Activated naive CD4-positive, alpha-beta T cell treated with anti-CD3 and anti-CD28 coated beads, Interleukin-2, amount 10 ng/mL, durations not matched to agents 7 days and 5 days (primary cell): ENCODE measurements at regions of chr4 and their contacts with region 1.

Region 1: GRCh38 chr4:154618708-154619315 is 6.4 kb upstream of the FGG start:
- DNase-seq: peak; percentile 81
- H3K4me3 Mint-ChIP-seq: no peak overlapping the region
- H3K27ac Mint-ChIP-seq: no peak overlapping the region
- H3K4me1 Mint-ChIP-seq: peaks cover 14% of the 10 kb centered on the region
- H3K27me3 Mint-ChIP-seq: peaks cover 8% of the 10 kb centered on the region

Region 2: GRCh38 chr4:154551872-154552686 is 66.7 kb before region 1 on chr4:
- CTCF ChIA-PET with region 1: interaction called, 95 read pairs
- DNase-seq: peak; percentile 80
- H3K4me3 Mint-ChIP-seq: no peak overlapping the region
- H3K27ac Mint-ChIP-seq: no peak overlapping the region
- H3K4me1 Mint-ChIP-seq: peaks cover 28% of the 10 kb centered on the region
- H3K27me3 Mint-ChIP-seq: no peaks in the 10 kb centered on the region

Region 3: GRCh38 chr4:154559494-154560418 is 59.1 kb before region 1 on chr4:
- CTCF ChIA-PET with region 1: interaction called, 90 read pairs
- DNase-seq: peak; percentile 29
- H3K4me3 Mint-ChIP-seq: no peak overlapping the region
- H3K27ac Mint-ChIP-seq: no peak overlapping the region
- H3K4me1 Mint-ChIP-seq: no peaks in the 10 kb centered on the region
- H3K27me3 Mint-ChIP-seq: no peaks in the 10 kb centered on the region